ENCODE measurements at regions of chr6 and their contacts with region 1.

Region 1: DNA sequence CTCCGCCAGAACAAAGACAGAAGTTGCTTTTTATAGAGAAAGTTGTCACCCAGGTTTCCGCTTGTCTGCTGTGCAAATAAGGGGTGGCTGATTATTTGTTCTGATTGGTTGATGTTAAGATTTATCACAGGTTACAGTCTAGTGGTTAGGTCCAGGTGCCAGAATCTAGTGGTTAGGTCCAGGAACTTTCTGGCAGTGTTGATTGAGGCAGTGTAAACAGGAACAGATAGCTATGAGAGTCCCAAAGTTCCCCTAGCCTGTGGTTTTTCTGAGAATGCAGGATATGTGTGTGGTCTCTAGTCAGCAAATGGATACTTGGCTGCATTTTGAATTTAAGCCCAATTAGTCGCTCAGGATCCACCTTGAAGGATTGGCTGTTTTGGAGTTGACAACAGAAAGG is 148.0 kb downstream of the TMEM200A start:
- DNase-seq: peak; percentile 94
- H3K4me3 Mint-ChIP-seq: peak overlapping the region; percentile 70
- H3K27ac Mint-ChIP-seq: peak overlapping the region; percentile 95
- H3K4me1 Mint-ChIP-seq: peaks cover 51% of the 10 kb centered on the region
- H3K27me3 Mint-ChIP-seq: no peaks in the 10 kb centered on the region

Region 2: GRCh38 chr6:130020907-130021629 is 492.7 kb before region 1 on chr6:
- intact Hi-C with region 1: loop called (anchors 10 kb)
- DNase-seq: peak; percentile 94
- H3K4me3 Mint-ChIP-seq: peak overlapping the region; percentile 95
- H3K27ac Mint-ChIP-seq: peak overlapping the region; percentile 93
- H3K4me1 Mint-ChIP-seq: peaks cover 17% of the 10 kb centered on the region
- H3K27me3 Mint-ChIP-seq: peaks cover 12% of the 10 kb centered on the region

Region 3: DNA sequence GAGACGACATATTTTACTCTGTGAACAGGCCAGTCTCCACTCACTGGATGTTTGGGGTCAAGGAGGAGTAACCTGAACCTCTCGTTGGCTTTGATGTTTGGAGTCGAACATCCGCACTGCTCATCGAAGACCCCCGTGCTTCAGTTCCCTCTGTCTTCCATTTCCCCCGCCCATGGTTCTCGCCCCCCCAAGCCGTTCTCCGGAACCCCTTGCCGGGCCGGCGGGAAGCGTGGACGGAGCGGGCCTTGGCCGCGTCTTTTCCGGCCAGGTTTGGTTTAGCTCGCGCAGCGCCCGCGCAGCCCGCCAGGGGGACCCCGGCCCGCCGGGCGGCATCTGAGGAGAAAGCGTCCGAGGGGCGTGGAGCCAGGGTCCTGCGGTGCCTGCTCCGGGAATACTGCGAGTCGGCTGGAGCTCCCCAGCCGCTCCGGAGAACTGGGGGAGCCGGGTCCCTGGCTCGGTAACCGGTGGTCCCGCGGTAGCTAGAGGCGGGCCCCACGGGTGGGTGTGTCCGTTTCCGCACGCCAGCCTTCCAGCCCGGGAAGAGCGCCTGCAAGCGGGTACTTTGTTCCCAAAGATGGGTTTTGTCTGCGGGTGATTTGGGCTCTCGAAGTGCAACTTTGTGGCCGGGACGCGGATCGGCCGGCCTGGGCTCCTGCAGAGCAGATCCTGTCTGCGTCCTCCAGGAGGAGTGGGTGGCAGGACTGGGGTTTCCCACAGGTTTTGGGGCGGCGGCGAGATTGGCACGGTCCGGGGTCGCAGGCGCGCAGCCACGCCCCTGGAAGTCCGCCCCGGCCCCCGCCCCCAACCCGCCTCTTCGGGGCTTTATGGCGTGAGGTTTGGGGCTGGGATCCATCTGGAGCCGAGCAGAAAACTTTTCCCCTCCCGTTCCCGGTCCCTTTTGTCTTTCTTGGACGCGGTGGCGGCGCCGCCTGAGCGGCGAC is 148.3 kb before region 1 on chr6 and contains the start of gene TMEM200A:
- intact Hi-C with region 1: loop called (anchors 5 kb)
- DNase-seq: peak; percentile 86
- H3K4me3 Mint-ChIP-seq: peak within 1 kb of the TSS; percentile 77
- H3K27ac Mint-ChIP-seq: peak within 1 kb of the TSS; percentile 27
- H3K4me1 Mint-ChIP-seq: peaks cover 23% of the 10 kb centered on the region
- H3K27me3 Mint-ChIP-seq: peaks cover 47% of the 10 kb centered on the region
- total RNA-seq, gene TMEM200A: 1.3 and 1.6 TPM in 2 replicates

Region 4: DNA sequence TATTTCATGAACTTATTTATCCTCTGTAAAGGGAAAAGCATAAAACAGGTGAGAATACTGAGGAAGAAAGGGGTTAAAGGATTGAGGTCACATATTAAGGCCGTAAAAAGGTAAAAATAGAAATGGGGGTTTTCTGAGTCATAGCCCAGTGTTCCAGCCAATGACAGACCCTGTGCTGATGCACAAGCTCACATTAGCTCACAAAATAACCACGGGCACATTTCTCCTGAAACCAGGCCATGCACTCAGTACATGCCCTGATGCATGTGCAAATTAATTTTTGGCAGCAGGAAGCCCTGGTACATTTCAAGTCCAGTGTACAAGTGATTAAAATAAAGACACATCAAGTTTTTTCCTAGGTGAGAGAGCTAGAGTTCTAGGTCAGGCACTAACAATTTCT is 46.5 kb after region 1 on chr6:
- intact Hi-C with region 1: loop called (anchors 5 kb)
- DNase-seq: no peak
- H3K4me3 Mint-ChIP-seq: no peak overlapping the region
- H3K27ac Mint-ChIP-seq: no peak overlapping the region
- H3K4me1 Mint-ChIP-seq: peaks cover 23% of the 10 kb centered on the region
- H3K27me3 Mint-ChIP-seq: no peaks in the 10 kb centered on the region

Region 5: DNA sequence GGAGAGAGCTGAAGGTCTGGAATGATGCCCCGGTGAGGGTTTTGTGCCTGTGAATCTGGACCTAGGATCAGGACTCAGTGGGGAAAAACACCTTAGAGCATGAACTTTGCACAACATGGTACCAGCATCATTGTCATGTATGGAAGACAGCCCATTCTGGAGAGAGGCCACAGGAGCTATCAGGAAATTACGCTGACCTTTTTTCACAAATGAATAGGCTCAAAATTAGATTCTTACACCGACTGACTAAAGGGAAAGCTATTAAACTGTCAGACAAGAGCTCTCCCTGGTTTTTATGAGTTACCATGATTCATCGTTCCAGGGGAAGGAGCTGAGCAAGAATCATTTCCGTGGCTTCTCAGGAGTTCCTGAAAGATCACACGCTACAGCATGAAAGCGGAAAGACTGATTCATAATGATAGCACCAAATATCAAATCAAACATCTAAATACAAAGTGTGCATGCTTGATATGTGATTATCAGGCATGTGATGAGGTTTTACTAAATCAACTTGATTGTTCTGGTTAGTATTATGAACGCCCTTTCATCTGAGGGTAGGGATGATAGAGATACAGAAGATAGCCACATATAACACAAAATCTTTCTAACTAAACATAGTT is 88.5 kb after region 1 on chr6:
- intact Hi-C with region 1: loop called (anchors 5 kb)
- DNase-seq: peak; percentile 65
- H3K4me3 Mint-ChIP-seq: peak overlapping the region; percentile 16
- H3K27ac Mint-ChIP-seq: peak overlapping the region; percentile 50
- H3K4me1 Mint-ChIP-seq: peaks cover 29% of the 10 kb centered on the region
- H3K27me3 Mint-ChIP-seq: peaks cover 2% of the 10 kb centered on the region

Region 6: DNA sequence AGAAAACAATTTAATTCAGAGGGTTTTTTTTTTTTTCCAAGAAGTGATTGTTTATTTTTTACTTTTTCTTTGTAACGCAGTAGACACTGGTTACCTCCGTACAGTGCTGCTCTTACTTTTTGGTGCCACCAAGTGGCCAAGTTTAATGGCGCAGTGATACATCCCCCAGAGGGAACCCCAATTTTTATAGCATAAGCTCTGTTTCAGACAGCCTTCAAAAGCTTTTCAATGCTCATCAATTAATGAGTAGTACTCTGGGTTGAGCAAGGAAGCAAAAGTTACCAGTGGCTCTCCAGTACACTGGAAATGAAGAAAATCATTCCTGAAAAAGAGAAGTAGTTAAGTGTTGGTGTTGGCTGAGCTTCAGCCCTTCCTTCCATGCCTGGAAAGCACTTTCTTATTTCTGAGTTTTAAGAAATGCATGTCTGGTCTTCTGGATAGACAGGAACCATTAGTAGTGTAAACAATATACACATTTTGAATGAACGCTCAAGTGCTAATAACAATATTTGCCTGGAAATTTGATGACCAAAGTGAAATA is 184.3 kb after region 1 on chr6:
- intact Hi-C with region 1: loop called (anchors 10 kb)
- DNase-seq: peak; percentile 92
- H3K4me3 Mint-ChIP-seq: no peak overlapping the region
- H3K27ac Mint-ChIP-seq: no peak overlapping the region
- H3K4me1 Mint-ChIP-seq: peaks cover 28% of the 10 kb centered on the region
- H3K27me3 Mint-ChIP-seq: peaks cover 2% of the 10 kb centered on the region